ENCODE measurements at regions of chr17 and their contacts with region 1.

Region 1: DNA sequence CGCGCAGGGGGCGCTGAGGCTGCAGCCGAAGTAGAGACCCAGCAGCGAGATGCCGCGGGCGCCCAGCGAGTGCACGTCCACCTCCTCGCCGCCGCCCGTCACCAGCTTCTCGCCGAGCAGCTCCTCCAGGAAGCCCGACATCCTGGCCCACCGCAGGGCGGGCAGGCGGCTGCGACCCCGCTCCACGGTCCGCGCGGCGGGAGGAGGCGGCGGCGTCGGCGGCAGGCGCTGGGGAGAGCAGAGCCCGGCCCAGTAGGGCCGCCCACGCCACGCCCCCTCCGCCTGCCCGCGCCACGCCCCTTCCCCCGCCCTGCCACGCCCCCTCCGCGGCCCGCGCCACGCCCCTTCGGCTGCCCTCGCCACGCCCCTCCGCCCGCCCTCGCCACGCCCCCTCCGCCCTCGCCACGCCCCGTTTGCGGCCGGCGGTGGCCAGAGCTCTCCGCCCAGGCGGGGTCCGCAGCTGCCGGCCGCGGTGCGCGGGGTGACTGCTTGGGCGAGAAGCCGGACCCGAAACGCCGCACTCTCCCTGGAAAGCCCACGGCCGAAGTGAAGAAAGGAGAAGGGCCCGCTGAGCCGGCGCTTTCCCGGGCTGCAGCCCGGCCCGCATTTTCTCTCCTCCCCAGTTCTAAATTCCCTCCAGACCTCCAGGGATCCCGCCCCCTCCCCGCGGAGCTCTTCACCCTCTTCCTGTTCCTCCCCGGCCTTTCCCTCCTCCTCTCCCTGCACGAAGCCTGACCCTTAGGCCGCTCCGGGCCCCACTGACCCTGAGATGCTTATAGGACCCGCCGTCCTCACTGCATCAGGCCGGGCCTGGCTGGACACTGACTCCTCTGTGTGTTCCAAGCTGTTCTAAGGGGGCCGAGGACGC is at the start of gene NXN:
- DNase-seq: peak; percentile 65 to 82
- ATAC-seq: peak; percentile 76 to 85
- H3K4me3 ChIP-seq: peak within 1 kb of the TSS; percentile 89
- H3K27ac ChIP-seq: peak within 1 kb of the TSS; percentile 76 to 91
- H3K4me1 ChIP-seq: peaks cover 16% of the 10 kb centered on the region; the same call in 2 of the 3 replicates
- CTCF ChIP-seq: peak; percentile 48
- EP300 ChIP-seq: no peak
- POLR2A ChIP-seq: peak; percentile 72
- RAD21 ChIP-seq: peak; percentile 19 to 56; a peak in 3 of 5 replicates
- polyA plus RNA-seq, gene NXN: 22.2 and 24.6 TPM in 2 replicates

Region 2: DNA sequence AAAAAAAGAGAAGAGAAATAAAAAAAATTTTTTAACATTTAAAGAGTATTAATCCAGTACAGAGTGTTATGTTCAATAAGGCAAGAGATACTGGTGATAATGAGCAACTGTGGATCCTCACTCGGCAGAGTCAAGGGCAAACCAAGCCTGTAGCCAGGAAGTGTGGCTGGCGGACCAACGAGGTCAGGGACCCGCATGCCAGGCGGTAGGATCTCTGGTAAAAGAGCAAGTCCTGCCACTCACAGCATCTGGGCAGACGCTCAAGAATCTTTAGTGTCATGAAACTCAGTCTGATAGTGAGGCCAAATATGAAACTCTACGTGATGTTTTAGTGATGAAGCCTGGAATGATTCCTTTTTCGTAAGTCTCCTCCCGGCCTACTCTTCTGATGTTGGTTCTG is 219.4 kb before region 1 on chr17:
- CTCF ChIA-PET with region 1: interaction called, 14 read pairs
- POLR2A ChIA-PET with region 1: no interaction called
- DNase-seq: no peak
- ATAC-seq: no peak
- H3K4me3 ChIP-seq: no peak overlapping the region
- H3K27ac ChIP-seq: no peak overlapping the region
- H3K4me1 ChIP-seq: no peaks in the 10 kb centered on the region
- CTCF ChIP-seq: no peak
- EP300 ChIP-seq: no peak
- POLR2A ChIP-seq: no peak
- RAD21 ChIP-seq: no peak

Region 3: DNA sequence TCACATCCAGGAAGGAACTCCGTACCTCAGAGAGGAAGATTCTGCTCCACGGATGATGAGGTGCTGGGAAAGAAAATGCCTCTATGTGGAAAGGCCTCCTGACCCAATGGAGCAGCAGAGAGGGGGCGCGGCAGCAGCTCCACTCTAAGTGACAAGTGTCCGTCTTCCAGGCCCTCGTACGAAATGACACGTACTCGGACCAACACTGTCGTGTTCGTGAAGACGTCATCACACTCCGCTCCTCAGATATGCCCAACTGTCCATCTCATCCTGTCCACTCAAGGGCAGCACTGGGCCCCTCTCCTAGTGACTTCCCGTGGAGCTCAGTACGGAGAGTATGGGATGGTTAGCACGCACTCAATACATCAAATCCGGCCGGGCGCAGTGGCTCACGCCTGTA is 165.4 kb before region 1 on chr17:
- CTCF ChIA-PET with region 1: interaction called, 14 read pairs
- POLR2A ChIA-PET with region 1: no interaction called
- DNase-seq: no peak
- ATAC-seq: no peak
- H3K4me3 ChIP-seq: no peak overlapping the region
- H3K27ac ChIP-seq: no peak overlapping the region
- H3K4me1 ChIP-seq: no peaks in the 10 kb centered on the region
- CTCF ChIP-seq: no peak
- EP300 ChIP-seq: no peak
- POLR2A ChIP-seq: no peak
- RAD21 ChIP-seq: no peak

Region 4: GRCh38 chr17:885971-886571 is 93.7 kb before region 1 on chr17:
- CTCF ChIA-PET with region 1: interaction called, 90 read pairs
- POLR2A ChIA-PET with region 1: interaction called, 3 read pairs
- DNase-seq: no peak
- ATAC-seq: no peak
- H3K4me3 ChIP-seq: no peak overlapping the region
- H3K27ac ChIP-seq: no peak overlapping the region
- H3K4me1 ChIP-seq: peaks cover 18% of the 10 kb centered on the region; the same call in 2 of the 3 replicates
- CTCF ChIP-seq: no peak
- EP300 ChIP-seq: no peak
- POLR2A ChIP-seq: no peak
- RAD21 ChIP-seq: no peak

Region 5: DNA sequence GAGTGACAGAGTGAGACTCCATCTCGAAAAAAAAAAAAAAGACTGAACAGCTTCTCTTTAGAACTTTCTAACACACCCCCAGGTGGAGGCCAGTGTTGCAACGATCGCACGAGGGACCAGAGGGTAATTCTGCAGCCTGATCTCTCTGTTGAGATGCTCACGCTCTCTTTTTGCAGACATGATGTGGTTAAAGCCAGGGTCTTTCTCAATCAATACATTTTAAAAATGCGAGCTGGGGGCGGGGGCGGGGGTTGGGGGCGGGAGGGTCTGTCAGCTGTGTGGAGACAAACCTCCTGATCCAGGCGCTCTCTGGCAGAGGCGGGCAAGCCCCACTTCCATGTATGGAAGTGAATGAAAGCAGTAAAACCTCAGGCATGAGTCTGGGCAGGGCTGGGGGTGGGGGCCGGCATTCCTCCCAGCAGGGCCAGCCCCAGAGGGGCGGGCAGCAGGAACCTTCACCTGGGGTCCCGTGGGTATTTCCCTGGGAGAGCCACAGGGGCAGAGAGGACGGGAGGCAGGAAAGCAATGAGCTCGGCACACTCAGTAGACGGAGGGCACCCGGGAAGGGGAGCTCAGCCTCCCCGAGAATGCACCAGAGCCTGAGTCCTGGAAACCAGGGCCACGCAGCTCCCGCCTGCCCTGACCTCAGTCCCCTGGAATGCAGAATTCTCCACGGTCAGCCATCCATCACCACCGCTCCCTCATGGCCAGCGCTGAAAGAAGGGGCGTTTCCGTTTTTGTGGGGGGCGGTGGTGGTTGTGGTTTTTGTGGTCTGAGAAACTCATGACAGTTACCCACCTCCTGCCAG is 28.2 kb before region 1 on chr17:
- CTCF ChIA-PET with region 1: interaction called, 30 read pairs
- POLR2A ChIA-PET with region 1: interaction called, 5 read pairs
- DNase-seq: peak; percentile 84 to 90
- ATAC-seq: peak; percentile 86 to 93
- H3K4me3 ChIP-seq: peak overlapping the region; percentile 29
- H3K27ac ChIP-seq: peak overlapping the region; percentile 80 to 90
- H3K4me1 ChIP-seq: peaks cover 43% of the 10 kb centered on the region
- CTCF ChIP-seq: no peak
- EP300 ChIP-seq: peak in 1 of 2 experiments; percentile 47; a peak in 1 of 5 replicates
- POLR2A ChIP-seq: no peak
- RAD21 ChIP-seq: no peak; a peak in 1 of 5 replicates

Measured in A549 (cell line).